ENCODE measurements at regions of chr11 and their contacts with region 1.

Region 1: DNA sequence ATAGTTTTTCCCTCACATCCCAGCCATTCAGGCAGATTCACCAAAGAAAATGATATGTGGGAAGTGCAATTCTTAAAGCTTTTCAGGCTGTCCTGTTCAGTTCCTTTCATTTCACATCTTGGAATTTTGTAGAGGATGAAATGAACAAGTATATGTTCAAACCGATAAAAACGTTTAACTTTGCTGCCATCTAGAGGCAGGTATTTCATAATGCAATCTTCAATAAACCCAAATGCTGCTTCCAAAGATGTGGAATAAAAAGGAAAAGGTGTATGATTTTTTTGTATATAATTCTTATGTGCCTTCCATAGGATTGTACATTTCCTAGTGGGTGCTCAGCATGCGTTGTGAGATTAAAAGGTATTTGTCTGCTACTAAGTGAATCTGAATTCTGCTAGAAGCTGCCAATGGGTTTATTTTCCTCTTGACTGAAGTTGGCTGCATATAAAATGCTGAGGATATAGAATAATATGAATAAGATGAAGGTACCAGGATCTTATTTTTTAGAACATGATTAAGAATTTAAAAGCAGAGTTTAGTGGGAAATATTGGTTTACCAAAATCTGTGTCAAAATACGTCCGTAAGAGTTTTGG is 199.3 kb downstream of the PGR start:
- DNase-seq: no peak
- H3K4me3 ChIP-seq: no peak overlapping the region
- H3K27ac ChIP-seq: no peak overlapping the region
- H3K4me1 ChIP-seq: no peaks in the 10 kb centered on the region
- H3K27me3 ChIP-seq: no peaks in the 10 kb centered on the region
- CTCF ChIP-seq: peak; percentile 30 to 64 (median 37)
- POLR2A ChIP-seq: no peak

Region 2: DNA sequence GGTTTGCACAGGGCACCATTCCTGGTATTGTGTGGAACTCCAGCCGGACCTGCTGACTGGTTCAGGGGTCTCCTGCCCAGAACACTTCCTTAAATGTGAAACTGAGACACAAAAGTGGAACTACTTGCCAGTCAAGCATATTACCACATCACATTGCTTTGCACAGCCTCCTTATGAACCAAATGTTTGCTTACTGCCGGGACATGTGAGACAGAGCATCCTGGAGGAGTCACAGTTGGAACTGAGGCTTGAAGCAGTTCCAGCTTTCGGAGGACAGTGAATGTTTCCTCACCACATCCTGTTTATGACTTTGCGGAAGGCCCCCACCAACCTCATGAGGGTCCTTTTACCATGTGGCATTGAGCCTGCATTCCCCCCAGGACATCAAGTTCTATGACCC is 349.0 kb before region 1 on chr11:
- intact Hi-C with region 1: loop called (anchors 10 kb)
- DNase-seq: no peak
- H3K4me3 ChIP-seq: no peak overlapping the region
- H3K27ac ChIP-seq: no peak overlapping the region
- H3K4me1 ChIP-seq: no peaks in the 10 kb centered on the region
- H3K27me3 ChIP-seq: no peaks in the 10 kb centered on the region
- CTCF ChIP-seq: no peak
- POLR2A ChIP-seq: no peak

Region 3: DNA sequence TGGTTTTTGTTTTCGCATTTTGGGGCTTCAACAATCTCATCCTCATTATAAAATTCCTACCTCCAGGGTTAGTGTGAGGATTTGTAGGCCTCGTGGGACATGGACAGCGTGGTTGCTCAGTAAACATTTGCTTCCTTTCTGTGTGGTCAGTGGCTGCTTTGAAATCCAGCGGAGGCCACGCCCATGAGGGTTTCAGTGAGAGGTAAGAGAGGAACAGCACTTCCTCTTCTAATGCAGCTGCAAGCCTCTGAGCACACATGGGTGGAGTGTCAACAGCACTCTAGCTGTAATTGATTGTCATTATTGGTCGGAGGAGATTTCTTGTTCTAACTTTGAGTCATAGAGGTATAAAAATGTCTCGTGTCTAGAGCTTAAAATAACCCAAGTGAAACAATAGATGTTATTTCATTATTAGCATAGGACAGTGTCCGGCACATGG is 249.2 kb before region 1 on chr11:
- intact Hi-C with region 1: loop called (anchors 5 kb)
- DNase-seq: peak; percentile 57
- H3K4me3 ChIP-seq: no peak overlapping the region
- H3K27ac ChIP-seq: no peak overlapping the region
- H3K4me1 ChIP-seq: no peaks in the 10 kb centered on the region
- H3K27me3 ChIP-seq: no peaks in the 10 kb centered on the region
- CTCF ChIP-seq: no peak
- POLR2A ChIP-seq: no peak

Region 4: GRCh38 chr11:101022256-101022655 is 92.0 kb after region 1 on chr11:
- intact Hi-C with region 1: no loop called
- DNase-seq: no peak
- H3K4me3 ChIP-seq: no peak overlapping the region
- H3K27ac ChIP-seq: no peak overlapping the region
- H3K4me1 ChIP-seq: no peaks in the 10 kb centered on the region
- H3K27me3 ChIP-seq: no peaks in the 10 kb centered on the region
- CTCF ChIP-seq: no peak
- POLR2A ChIP-seq: no peak

Measured in testis (tissue), 5 donors.